Breast epithelium (tissue), 4 donors: ENCODE measurements at regions of chr2 and their contacts with region 1.

Region 1: GRCh38 chr2:74828543-74828942 is 5.4 kb upstream of the HK2 start:
- DNase-seq: no peak
- H3K4me3 ChIP-seq: no peak overlapping the region
- H3K27ac ChIP-seq: no peak overlapping the region
- H3K4me1 ChIP-seq: no peaks in the 10 kb centered on the region
- H3K27me3 ChIP-seq: no peaks in the 10 kb centered on the region
- CTCF ChIP-seq: no peak
- POLR2A ChIP-seq: no peak

Region 2: DNA sequence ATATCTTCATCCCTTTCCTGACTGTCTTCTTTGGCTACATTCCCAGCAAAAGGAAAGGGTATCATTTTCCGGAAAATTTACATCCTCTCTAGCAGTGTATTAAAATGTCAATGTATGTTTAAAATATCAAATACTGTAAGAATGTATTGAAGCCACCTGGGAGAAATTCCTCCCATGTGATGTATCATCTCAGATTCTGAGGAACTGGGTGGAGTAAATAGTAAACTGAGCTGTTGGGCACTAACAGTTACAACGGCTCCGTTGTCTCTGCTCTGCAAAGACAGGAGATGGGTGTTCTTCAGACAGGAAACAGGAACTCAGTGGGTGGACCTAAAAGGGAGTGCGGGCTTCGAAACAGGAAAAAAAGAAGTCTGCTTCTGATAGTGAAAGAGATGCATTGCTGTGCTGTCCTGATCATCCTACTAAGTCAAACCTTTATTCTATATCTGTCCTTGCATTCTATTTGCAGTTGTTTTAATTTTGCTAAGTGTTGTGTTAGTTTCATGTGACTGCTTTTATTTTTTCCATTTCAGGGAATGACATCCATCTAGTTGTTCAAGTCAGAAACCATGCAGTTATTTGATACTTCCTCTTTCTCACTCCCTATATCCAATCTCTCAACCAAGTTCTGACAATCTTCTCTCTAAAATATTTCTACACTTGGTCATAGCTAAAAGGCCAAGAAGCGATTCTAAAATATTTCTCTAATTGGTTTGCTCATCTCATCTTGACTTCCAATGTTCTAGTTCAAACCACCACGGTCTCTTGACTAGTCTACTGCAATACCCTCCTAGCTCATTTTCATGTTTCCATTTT is 254.6 kb before region 1 on chr2:
- intact Hi-C with region 1: no loop called
- DNase-seq: no peak
- H3K4me3 ChIP-seq: no peak overlapping the region
- H3K27ac ChIP-seq: no peak overlapping the region
- H3K4me1 ChIP-seq: peaks cover 0 to 4% of the 10 kb centered on the region in 2 donors
- H3K27me3 ChIP-seq: no peaks in the 10 kb centered on the region
- CTCF ChIP-seq: no peak
- POLR2A ChIP-seq: no peak

Region 3: DNA sequence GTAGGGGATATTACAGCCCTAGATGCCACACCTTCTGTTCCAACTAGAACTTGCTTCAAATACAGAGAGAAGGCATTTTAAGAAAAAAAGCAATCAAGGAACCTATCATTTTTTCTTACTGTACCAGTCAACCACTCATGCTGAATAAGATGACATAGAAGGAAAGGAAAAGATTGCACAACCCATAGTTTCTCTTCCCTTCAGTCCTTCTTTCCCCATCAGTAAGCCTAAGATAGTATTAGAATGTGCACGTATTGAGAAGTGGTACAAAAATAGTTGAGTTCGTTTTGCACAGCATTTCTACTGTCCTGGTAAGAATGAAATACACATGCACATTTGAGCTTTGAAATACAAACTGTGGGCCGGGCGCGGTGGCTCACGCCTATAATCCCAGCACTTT is 21.6 kb before region 1 on chr2:
- intact Hi-C with region 1: no loop called
- DNase-seq: no peak
- H3K4me3 ChIP-seq: no peak overlapping the region
- H3K27ac ChIP-seq: no peak overlapping the region
- H3K4me1 ChIP-seq: no peaks in the 10 kb centered on the region
- H3K27me3 ChIP-seq: no peaks in the 10 kb centered on the region
- CTCF ChIP-seq: no peak
- POLR2A ChIP-seq: no peak

Region 4: DNA sequence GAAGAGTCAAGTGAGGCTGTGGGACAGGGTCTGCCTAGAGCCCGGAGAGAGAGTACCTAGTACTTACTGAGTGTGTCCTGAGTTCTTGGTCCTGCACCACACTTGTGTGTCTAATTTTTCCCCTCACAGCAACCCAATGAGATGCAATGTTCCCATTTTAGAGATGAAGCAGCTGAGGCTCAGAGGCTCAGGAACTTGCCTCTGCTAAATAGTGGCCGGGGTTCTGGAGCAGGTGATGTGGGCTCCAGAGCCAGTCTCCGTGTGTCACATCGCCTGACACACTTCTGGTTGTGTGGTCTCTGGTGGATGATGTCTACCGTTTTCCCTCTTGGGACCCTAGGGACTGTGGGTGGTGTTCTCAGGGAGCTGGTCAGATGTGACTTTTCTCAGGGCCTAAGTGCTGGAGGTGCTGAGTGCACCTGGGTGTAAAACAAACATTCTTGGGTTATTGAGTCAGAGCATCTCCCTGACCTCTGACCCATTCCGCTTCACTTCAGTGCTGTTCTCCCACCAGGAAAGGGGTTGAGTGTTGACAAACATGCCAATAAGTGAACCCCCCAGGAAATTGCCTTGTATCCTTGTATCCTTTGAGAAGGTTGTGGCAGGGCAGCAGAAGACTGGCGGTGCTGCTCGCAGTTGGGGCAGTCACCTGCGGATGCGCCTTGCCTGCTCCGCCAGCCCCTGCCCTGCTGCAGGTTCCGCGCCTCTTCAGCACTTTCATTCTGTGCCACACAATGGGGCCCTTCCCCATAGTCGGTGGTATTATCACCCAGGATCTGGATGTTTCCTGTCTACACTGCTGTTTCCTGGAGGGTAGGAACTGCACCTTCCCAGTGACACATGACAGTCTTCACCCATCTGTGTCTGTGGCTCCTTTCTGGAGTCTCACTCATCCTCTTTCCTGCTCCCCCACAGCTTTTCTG is 37.5 kb after region 1 on chr2:
- intact Hi-C with region 1: loop called (anchors 1 kb)
- DNase-seq: no peak
- H3K4me3 ChIP-seq: no peak overlapping the region
- H3K27ac ChIP-seq: peak overlapping the region; percentile 1 to 27
- H3K4me1 ChIP-seq: no peaks in the 10 kb centered on the region
- H3K27me3 ChIP-seq: no peaks in the 10 kb centered on the region
- CTCF ChIP-seq: no peak
- POLR2A ChIP-seq: no peak